ENCODE measurements at regions of chr11 and their contacts with region 1.

Region 1: DNA sequence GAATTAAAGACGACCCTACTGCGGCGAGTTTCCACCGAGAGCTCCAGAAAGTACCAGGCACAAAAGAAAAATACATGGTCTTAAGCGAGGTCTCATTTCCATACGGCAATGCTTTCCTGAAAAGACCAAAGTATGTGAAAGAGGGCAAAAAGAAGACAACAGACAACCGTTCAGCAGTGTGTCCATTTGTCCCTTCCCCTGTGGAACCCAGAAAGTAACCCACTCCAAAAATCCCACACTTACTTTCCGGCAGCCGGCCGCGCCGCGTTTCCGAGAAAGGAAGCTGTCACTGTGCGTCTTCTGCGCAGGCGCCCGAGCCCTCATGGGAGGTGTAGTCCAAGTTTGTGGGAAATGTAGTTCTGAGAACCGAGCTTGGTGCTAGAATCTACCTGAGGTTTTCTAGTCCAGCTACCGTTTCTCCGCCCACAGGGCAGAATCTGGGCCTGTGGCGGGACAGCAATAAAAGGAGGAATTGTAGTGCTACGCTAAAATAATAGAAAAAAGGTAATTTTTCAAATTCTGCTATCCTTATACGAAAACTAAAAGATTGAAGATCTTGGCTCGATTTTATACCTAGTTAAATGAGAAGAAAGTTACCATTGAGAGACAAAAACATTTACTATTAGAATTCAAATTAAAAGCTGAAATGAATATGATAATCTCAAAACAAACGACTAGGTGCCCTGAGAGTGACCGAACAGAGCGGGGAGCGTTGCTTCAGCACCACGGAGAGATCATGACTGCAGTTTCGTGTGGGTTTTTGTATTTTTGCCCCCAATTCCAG is at the start of gene PUS3:
- DNase-seq: peak; percentile 93
- H3K4me3 Mint-ChIP-seq: peak within 1 kb of the TSS; percentile 94
- H3K27ac Mint-ChIP-seq: peak within 1 kb of the TSS; percentile 95
- H3K4me1 Mint-ChIP-seq: peaks cover 37% of the 10 kb centered on the region
- H3K27me3 Mint-ChIP-seq: peaks cover 22% of the 10 kb centered on the region
- total RNA-seq, gene PUS3: 14.9 to 18.5 TPM

Region 2: GRCh38 chr11:125625630-125626287 is 277.4 kb before region 1 on chr11:
- CTCF ChIA-PET with region 1: no interaction called
- intact Hi-C with region 1: loop called (anchors 1 kb)
- DNase-seq: peak; percentile 90
- H3K4me3 Mint-ChIP-seq: peak overlapping the region; percentile 89
- H3K27ac Mint-ChIP-seq: peak overlapping the region; percentile 99
- H3K4me1 Mint-ChIP-seq: peaks cover 21% of the 10 kb centered on the region
- H3K27me3 Mint-ChIP-seq: no peaks in the 10 kb centered on the region

Region 3: GRCh38 chr11:125935618-125936199 is 32.6 kb after region 1 on chr11:
- CTCF ChIA-PET with region 1: no interaction called
- intact Hi-C with region 1: no loop called
- DNase-seq: no peak
- H3K4me3 Mint-ChIP-seq: no peak overlapping the region
- H3K27ac Mint-ChIP-seq: no peak overlapping the region
- H3K4me1 Mint-ChIP-seq: peaks cover 8% of the 10 kb centered on the region
- H3K27me3 Mint-ChIP-seq: no peaks in the 10 kb centered on the region

Region 4: DNA sequence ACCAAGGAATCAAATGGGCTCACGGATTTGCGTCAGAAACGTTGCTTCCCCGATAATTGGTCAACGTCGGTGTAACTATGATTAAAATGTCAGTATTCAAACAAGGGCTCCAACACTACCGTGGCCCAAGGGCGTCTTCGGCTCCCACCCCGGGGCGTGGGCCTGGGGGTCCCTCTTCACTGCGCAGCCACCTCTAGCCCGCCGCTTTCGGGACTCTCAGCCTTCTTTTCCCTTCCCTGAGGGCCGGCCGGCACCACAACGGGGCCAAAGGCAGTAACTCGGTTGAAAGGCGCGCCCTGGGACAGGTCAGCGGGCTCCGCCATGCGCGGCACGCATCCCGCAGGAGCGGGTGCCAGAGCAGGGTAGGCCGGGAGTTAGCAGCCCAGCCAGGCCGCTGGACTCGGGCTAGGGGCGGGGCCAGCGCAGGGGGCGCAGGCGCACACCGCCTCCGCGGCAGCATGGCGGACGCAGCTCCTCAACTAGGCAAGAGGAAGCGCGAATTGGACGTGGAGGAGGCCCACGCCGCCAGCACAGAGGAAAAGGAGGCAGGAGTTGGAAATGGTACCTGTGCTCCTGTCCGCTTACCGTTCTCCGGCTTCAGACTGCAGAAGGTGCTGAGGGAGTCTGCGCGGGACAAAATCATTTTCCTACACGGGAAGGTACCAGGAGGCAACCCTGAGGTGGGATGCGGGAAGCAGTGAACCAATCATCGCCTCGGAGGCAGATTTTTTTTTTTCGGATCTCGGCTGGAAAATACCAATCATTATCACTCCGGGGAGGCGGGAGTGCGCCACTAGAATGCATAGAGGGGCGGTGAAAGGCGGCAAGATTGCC is 400.7 kb after region 1 on chr11 and contains the start of gene DCPS:
- CTCF ChIA-PET with region 1: no interaction called
- intact Hi-C with region 1: loop called (anchors 1 kb)
- DNase-seq: peak; percentile 86
- H3K4me3 Mint-ChIP-seq: peak within 1 kb of the TSS; percentile 95
- H3K27ac Mint-ChIP-seq: peak within 1 kb of the TSS; percentile 97
- H3K4me1 Mint-ChIP-seq: peaks cover 35% of the 10 kb centered on the region
- H3K27me3 Mint-ChIP-seq: no peaks in the 10 kb centered on the region
- total RNA-seq, gene DCPS: 34.9 to 39.5 TPM

Measured in activated naive CD4-positive, alpha-beta T cell treated with anti-CD3 and anti-CD28 coated beads for 36 hours (primary cell).